Stomach (tissue), 19 donors: ENCODE measurements at regions of chr16 and their contacts with region 1.

Region 1: GRCh38 chr16:77169650-77170236 is 21.2 kb upstream of the MON1B start:
- DNase-seq: peak; percentile 47 to 75
- H3K4me3 ChIP-seq: no peak overlapping the region
- H3K27ac ChIP-seq: no peak overlapping the region
- H3K4me1 ChIP-seq: no peaks in the 10 kb centered on the region
- H3K27me3 ChIP-seq: peaks cover 0 to 36% (median 6%) of the 10 kb centered on the region in 3 donors
- CTCF ChIP-seq: peak in 4 of 7 experiments; percentile 11 to 40 (median 27)
- EP300 ChIP-seq: no peak
- POLR2A ChIP-seq: no peak

Region 2: GRCh38 chr16:75794426-75794825 is 1375.3 kb before region 1 on chr16:
- intact Hi-C with region 1: loop called (anchors 5 kb)
- DNase-seq: no peak
- H3K4me3 ChIP-seq: no peak overlapping the region
- H3K27ac ChIP-seq: no peak overlapping the region
- H3K4me1 ChIP-seq: no peaks in the 10 kb centered on the region
- H3K27me3 ChIP-seq: peaks cover 0 to 12% (median 0%) of the 10 kb centered on the region in 3 donors
- CTCF ChIP-seq: no peak
- EP300 ChIP-seq: no peak
- POLR2A ChIP-seq: no peak